Activated T-helper 2 cell treated with anti-CD3 and anti-CD28 coated beads, Interferon-gamma antibody, Interleukin-2, Interleukin-4, amounts not matched to agents 10 μg/mL and 5 μg/mL and 100 μg/mL, durations not matched to agents 14 hours and 24 hours and 36 hours (primary cell): ENCODE measurements at regions of chr2 and their contacts with region 1.

Region 1: DNA sequence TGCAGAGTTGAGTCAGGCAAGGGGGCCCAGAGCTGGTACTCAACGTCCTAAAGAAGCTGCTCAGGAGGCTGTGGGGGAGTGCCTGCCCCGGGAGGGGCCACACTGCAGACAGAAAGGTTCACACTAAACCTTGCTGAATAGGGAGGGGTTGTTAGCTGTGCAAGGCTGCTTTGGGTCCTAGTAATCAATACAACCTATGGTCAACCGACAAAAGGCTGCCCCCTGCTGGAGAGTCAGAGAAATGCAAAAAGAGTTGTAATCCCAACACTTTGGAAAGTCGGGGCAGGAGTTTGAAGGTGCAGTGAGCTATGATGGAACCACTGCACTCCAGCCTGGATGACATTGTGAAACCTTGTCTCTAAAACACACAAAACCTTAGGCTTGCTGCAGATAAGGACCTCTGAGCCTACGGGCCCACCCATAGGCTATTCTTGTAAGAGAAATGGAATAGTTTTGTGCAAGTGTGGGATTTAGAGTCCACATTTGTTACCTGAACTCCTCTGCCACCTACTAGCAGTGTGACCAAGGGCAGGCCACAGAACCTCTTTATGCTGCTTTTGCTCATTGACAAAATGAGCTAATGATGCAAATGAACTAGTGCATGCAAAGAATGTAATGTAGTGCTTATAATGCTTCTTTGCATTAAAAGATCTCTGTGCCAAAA is 81.5 kb downstream of the PRPF40A start:
- DNase-seq: peak; percentile 46
- H3K4me3 Mint-ChIP-seq: no peak overlapping the region
- H3K27ac Mint-ChIP-seq: no peak overlapping the region
- H3K4me1 Mint-ChIP-seq: no peaks in the 10 kb centered on the region
- H3K27me3 Mint-ChIP-seq: no peaks in the 10 kb centered on the region

Region 2: GRCh38 chr2:152036611-152037469 is 598.9 kb before region 1 on chr2:
- intact Hi-C with region 1: loop called (anchors 1 kb)
- DNase-seq: peak; percentile 22
- H3K4me3 Mint-ChIP-seq: no peak overlapping the region
- H3K27ac Mint-ChIP-seq: no peak overlapping the region
- H3K4me1 Mint-ChIP-seq: no peaks in the 10 kb centered on the region
- H3K27me3 Mint-ChIP-seq: peaks cover 5% of the 10 kb centered on the region

Region 3: DNA sequence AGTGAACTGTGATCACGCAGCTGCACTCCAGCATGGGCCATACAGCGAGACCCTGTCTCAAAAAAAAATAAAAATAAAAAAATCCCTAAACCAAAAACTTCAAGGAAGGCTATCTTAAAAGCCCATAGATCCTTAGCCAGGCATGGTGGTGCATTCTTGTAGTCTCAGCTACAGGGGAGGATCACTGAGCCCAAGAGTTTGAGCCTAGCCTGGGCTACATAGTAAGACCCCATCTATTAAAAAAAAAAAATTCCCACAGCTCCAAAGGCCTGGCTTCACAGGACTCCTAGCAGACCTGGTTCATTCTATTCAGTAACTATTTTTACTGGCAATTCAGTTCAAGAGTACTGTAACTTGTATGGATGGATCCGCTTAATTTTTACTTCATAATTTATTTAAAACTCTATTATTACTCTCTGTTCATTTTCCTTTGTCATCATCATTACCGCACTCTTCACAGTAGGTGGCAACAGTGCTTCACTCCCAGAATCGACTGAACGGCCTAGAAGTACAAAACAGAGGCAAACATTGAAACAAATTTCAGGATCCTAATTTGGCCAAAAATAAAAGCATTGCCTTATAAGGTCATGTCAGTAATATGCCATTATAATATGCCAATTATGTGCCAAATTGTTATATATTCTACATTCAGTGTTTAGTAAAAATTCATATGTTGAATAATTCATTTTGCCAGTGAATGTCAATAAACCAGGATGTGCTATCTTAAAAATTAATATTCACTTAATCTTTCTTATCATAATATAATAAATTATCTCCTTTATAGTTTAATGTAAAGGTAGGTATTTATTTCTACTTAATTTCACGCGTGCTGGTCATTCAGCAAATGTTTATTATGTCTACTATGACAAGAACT is 445.9 kb before region 1 on chr2:
- intact Hi-C with region 1: loop called (anchors 1 kb)
- DNase-seq: no peak
- H3K4me3 Mint-ChIP-seq: no peak overlapping the region
- H3K27ac Mint-ChIP-seq: no peak overlapping the region
- H3K4me1 Mint-ChIP-seq: peaks cover 6% of the 10 kb centered on the region
- H3K27me3 Mint-ChIP-seq: peaks cover 15% of the 10 kb centered on the region

Region 4: DNA sequence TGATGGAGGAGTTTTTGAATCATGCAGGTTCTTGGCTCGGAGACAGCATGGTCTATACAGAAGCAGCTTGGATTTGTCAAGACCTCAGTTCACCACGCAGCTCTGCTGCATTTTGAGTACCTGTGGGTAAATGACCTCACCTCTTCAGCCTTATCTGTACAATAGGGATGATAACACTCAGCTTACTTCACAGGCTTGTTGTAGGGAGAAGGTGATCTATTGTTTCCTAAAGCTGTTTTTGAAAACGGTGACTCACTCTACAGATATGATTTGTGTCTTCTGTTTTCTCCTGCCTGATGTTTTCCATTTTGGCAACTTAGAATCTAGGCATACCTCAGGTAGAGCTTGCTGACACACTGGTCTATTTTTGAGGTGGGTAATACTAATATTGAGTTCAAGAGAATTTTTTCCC is 220.5 kb before region 1 on chr2:
- intact Hi-C with region 1: loop called (anchors 2 kb)
- DNase-seq: no peak
- H3K4me3 Mint-ChIP-seq: peak overlapping the region; percentile 8
- H3K27ac Mint-ChIP-seq: peak overlapping the region; percentile 88
- H3K4me1 Mint-ChIP-seq: peaks cover 53% of the 10 kb centered on the region
- H3K27me3 Mint-ChIP-seq: peaks cover 2% of the 10 kb centered on the region

Region 5: GRCh38 chr2:152425765-152426727 is 209.7 kb before region 1 on chr2:
- intact Hi-C with region 1: no loop called
- DNase-seq: no peak
- H3K4me3 Mint-ChIP-seq: no peak overlapping the region
- H3K27ac Mint-ChIP-seq: no peak overlapping the region
- H3K4me1 Mint-ChIP-seq: peaks cover 8% of the 10 kb centered on the region
- H3K27me3 Mint-ChIP-seq: no peaks in the 10 kb centered on the region